Esophagus muscularis mucosa (tissue), 4 donors: ENCODE measurements at regions of chr4 and their contacts with region 1.

Region 1: GRCh38 chr4:76607266-76607799 is 172.3 kb downstream of the SHROOM3 start:
- DNase-seq: no peak
- H3K4me3 ChIP-seq: no peak overlapping the region
- H3K27ac ChIP-seq: peak overlapping the region in 1 of 4 donors; percentile 22
- H3K4me1 ChIP-seq: peaks cover 12 to 57% (median 53%) of the 10 kb centered on the region in 4 donors
- H3K27me3 ChIP-seq: no peaks in the 10 kb centered on the region
- CTCF ChIP-seq: no peak
- EP300 ChIP-seq: no peak
- POLR2A ChIP-seq: no peak

Region 2: DNA sequence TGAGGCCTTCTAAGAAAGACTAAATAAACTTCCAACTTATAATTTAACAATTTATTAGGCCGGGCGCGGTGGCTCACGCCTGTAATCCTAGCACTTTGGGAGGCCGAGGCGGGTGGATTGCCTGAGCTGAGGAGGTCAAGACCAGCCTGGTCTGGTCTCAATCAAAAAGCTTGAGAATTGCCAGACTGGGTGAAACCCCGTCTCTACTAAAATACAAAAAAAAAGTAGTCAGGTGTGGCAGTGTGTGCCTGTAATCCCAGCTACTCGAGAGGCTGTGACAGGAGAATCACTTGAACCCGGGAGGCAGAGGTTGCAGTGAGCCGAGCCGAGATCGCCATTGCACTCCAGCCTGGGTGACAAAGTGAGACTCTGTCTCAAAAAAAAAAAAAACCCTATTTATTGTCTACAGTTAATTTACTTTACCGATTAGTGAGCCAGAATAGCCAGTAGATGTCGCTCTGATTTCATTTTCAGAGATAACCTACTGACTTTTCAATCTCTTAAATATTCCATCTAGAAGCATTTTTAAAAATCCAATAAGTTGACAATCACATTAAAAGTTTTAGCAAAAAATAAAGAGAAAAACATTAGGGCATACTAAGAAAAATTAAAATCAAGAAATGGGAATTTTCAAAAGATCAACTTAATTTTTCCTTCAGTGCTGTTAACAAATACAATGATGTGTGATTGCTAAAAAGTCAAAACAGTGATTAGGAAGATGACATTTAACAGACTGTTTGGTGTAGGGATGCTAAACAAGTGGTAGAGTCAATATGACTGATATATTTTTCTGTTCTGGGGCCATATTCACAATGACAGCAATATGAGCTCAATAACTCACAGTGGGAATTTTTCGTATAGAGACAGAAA is 176.6 kb before region 1 on chr4:
- intact Hi-C with region 1: loop called (anchors 10 kb)
- DNase-seq: no peak
- H3K4me3 ChIP-seq: no peak overlapping the region
- H3K27ac ChIP-seq: no peak overlapping the region
- H3K4me1 ChIP-seq: peaks cover 0 to 29% (median 20%) of the 10 kb centered on the region in 4 donors
- H3K27me3 ChIP-seq: no peaks in the 10 kb centered on the region
- CTCF ChIP-seq: peak; percentile 71 to 74 (median 73)
- EP300 ChIP-seq: no peak
- POLR2A ChIP-seq: no peak

Region 3: GRCh38 chr4:76515975-76516843 is 91.1 kb before region 1 on chr4:
- intact Hi-C with region 1: loop called (anchors 5 kb)
- DNase-seq: no peak
- H3K4me3 ChIP-seq: no peak overlapping the region
- H3K27ac ChIP-seq: no peak overlapping the region
- H3K4me1 ChIP-seq: peaks cover 0 to 23% (median 14%) of the 10 kb centered on the region in 4 donors
- H3K27me3 ChIP-seq: no peaks in the 10 kb centered on the region
- CTCF ChIP-seq: no peak
- EP300 ChIP-seq: no peak
- POLR2A ChIP-seq: no peak

Region 4: GRCh38 chr4:76733068-76733771 is 125.9 kb after region 1 on chr4:
- intact Hi-C with region 1: loop called (anchors 5 kb)
- DNase-seq: no peak
- H3K4me3 ChIP-seq: no peak overlapping the region
- H3K27ac ChIP-seq: peak overlapping the region in 2 of 4 donors; percentile 13 to 20
- H3K4me1 ChIP-seq: peaks cover 12 to 50% (median 41%) of the 10 kb centered on the region in 4 donors
- H3K27me3 ChIP-seq: no peaks in the 10 kb centered on the region
- CTCF ChIP-seq: peak in 2 of 3 experiments; percentile 21 to 38
- EP300 ChIP-seq: no peak
- POLR2A ChIP-seq: no peak